WTC11 (cell line): ENCODE measurements at regions of chr17 and their contacts with region 1.

Region 1: DNA sequence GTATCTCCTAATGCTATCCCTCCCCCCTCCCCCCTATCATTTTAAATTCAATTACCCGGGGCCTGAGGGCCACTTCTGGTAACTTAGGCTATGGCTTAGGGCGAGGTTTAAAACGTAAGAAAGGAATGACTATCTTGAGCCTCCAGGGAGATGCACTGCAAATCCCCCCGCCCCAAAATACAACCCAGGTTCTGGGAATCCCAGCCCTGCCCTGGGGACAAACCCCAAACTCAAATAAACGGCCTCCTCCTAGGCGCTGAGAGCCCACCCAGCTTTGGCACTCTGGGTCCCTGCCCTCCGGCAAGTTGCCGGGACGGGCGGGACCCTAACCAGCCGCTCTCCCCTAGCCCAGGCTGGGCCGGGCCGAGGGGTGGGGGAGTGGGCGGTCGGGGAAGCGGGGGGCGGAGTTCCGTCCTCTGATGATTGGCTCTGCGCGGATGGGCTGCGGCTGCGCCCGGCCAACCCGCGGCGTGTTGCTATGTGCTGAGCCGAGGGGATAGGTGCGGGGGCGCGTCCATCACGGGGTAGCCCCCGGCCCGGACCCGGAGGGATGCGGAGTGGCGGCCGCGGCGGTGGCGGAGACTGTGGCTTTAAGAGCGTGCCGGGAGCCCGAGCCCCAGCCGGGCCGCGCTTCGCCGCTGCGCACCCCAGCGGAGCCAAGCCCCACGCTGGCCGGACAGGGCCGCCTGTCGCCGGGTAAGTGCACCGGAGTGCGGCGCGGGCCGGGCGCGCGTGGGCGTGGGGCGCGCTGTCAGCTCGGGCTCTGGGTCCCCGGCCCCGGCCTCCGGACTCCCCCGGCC is at the start of gene YPEL2:
- DNase-seq: peak; percentile 98
- ATAC-seq: peak; percentile 98
- H3K4me3 Mint-ChIP-seq: peak within 1 kb of the TSS; percentile 81
- H3K27ac Mint-ChIP-seq: peak within 1 kb of the TSS; percentile 94
- H3K4me1 Mint-ChIP-seq: peaks cover 43% of the 10 kb centered on the region
- H3K27me3 Mint-ChIP-seq: peaks cover 32% of the 10 kb centered on the region
- CTCF ChIP-seq: no peak
- total RNA-seq, gene YPEL2: 2.2 to 3.1 TPM (median 2.5 TPM) in 3 replicates

Region 2: DNA sequence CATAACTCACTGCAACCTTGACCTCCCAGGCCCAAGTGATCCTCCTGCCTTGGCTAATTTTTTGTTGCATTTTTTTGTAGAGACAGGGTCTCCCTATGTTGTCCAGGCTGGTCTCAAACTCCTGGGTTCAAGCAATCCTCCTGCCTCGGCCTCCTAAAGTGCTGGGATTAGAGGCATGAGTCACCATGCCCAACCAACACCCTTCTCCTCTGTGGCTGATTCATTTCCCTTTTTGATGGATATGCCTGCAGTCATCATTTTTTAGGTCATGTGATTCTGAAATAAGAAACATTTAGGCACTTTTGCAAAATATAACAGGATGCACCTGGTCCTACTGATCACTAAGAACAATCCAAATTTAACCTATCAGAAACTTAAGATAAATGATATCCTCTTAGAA is 43.9 kb before region 1 on chr17:
- CTCF ChIA-PET with region 1: no interaction called
- POLR2A ChIA-PET with region 1: no interaction called
- DNase-seq: no peak
- ATAC-seq: no peak
- H3K4me3 Mint-ChIP-seq: no peak overlapping the region
- H3K27ac Mint-ChIP-seq: no peak overlapping the region
- H3K4me1 Mint-ChIP-seq: peaks cover 18% of the 10 kb centered on the region
- H3K27me3 Mint-ChIP-seq: peaks cover 97% of the 10 kb centered on the region
- CTCF ChIP-seq: no peak

Region 3: GRCh38 chr17:59311130-59311920 is 20.0 kb before region 1 on chr17:
- CTCF ChIA-PET with region 1: interaction called, 28 read pairs
- POLR2A ChIA-PET with region 1: no interaction called
- DNase-seq: peak; percentile 18
- ATAC-seq: peak; percentile 96
- H3K4me3 Mint-ChIP-seq: no peak overlapping the region
- H3K27ac Mint-ChIP-seq: no peak overlapping the region
- H3K4me1 Mint-ChIP-seq: no peaks in the 10 kb centered on the region
- H3K27me3 Mint-ChIP-seq: no peaks in the 10 kb centered on the region
- CTCF ChIP-seq: peak; percentile 67

Region 4: DNA sequence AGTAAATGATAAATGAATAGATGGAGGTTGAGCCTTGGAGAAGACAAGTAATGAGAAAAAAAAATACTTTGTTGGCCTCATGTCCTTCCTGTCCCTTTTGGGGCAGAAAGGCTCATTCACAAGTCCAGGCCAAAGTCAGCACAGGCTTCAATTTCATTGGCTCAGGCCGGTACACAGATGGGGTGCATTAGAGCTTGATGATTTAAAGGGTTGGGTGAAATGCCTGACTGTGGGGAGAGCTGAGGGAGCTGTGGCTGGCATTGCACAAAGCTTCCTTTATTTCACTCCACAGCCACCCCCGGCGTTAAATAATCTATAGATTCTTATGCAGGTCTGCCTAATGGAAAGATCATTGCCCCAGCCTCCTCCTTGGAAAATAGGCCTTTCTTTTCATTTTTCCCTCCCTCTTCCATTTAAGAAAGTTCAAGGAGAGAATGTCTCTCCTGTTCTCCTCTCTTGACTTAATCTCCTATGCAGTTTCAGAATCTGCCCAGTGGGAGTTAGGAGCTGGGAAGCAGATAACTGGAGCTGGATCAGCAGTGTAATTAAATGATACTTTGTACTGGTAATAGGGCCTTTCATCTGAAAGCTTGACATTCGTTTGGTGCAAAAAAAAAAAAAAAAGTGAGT is 24.5 kb after region 1 on chr17:
- CTCF ChIA-PET with region 1: interaction called, 10 read pairs
- POLR2A ChIA-PET with region 1: no interaction called
- DNase-seq: no peak
- ATAC-seq: no peak
- H3K4me3 Mint-ChIP-seq: no peak overlapping the region
- H3K27ac Mint-ChIP-seq: no peak overlapping the region
- H3K4me1 Mint-ChIP-seq: peaks cover 23% of the 10 kb centered on the region
- H3K27me3 Mint-ChIP-seq: no peaks in the 10 kb centered on the region
- CTCF ChIP-seq: no peak

Region 5: DNA sequence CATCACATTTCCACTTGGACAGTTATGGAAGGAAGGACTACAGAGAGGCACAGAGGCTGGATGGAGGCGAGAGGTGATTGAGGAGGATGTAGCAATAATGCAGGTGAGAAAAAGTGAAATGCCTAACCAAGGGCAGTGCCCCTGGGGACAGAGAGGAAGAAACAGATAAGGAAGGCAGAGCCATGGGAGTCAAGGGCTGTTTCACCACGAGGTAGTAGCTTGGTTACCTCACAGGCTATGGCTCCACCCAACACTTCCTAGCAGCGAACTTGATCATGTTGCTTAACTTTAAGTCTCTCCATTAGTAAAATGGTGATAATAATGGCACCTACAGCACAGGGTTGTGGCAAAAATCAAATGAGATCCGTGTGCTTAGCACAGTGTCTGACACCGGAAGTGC is 84.1 kb after region 1 on chr17:
- CTCF ChIA-PET with region 1: interaction called, 12 read pairs
- POLR2A ChIA-PET with region 1: no interaction called
- DNase-seq: no peak
- ATAC-seq: no peak
- H3K4me3 Mint-ChIP-seq: no peak overlapping the region
- H3K27ac Mint-ChIP-seq: no peak overlapping the region
- H3K4me1 Mint-ChIP-seq: no peaks in the 10 kb centered on the region
- H3K27me3 Mint-ChIP-seq: no peaks in the 10 kb centered on the region; the same call in 1 of the 2 replicates
- CTCF ChIP-seq: no peak

Region 6: GRCh38 chr17:59435238-59435637 is 103.9 kb after region 1 on chr17:
- CTCF ChIA-PET with region 1: interaction called, 53 read pairs
- POLR2A ChIA-PET with region 1: interaction called, 3 read pairs
- DNase-seq: no peak
- ATAC-seq: no peak
- H3K4me3 Mint-ChIP-seq: no peak overlapping the region
- H3K27ac Mint-ChIP-seq: no peak overlapping the region
- H3K4me1 Mint-ChIP-seq: no peaks in the 10 kb centered on the region; the same call in 1 of the 2 replicates
- H3K27me3 Mint-ChIP-seq: no peaks in the 10 kb centered on the region; the same call in 1 of the 2 replicates
- CTCF ChIP-seq: no peak

Region 7: DNA sequence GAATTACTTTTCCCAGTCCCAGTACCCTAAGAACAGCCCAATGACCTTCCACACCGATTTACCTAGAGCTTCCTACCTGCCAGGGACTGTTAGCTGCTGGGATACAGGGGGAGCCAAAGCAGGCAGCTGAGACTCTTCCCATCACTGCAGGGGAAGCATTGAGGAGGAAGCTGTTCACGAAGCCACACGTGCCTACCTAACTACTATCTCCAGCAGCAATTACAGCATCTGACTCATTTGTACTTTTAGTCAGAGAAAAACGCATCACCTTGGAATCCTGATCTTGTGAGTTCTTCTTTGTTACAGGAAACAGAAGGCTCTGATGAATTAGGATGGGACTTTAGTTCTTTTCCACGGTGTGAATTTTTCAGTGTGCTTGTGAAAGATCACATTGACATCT is 120.4 kb after region 1 on chr17:
- CTCF ChIA-PET with region 1: interaction called, 10 read pairs
- POLR2A ChIA-PET with region 1: no interaction called
- DNase-seq: no peak
- ATAC-seq: peak; percentile 71
- H3K4me3 Mint-ChIP-seq: no peak overlapping the region
- H3K27ac Mint-ChIP-seq: no peak overlapping the region
- H3K4me1 Mint-ChIP-seq: no peaks in the 10 kb centered on the region
- H3K27me3 Mint-ChIP-seq: no peaks in the 10 kb centered on the region
- CTCF ChIP-seq: no peak